Stomach (tissue), 19 donors: ENCODE measurements at regions of chr9 and their contacts with region 1.

Region 1: DNA sequence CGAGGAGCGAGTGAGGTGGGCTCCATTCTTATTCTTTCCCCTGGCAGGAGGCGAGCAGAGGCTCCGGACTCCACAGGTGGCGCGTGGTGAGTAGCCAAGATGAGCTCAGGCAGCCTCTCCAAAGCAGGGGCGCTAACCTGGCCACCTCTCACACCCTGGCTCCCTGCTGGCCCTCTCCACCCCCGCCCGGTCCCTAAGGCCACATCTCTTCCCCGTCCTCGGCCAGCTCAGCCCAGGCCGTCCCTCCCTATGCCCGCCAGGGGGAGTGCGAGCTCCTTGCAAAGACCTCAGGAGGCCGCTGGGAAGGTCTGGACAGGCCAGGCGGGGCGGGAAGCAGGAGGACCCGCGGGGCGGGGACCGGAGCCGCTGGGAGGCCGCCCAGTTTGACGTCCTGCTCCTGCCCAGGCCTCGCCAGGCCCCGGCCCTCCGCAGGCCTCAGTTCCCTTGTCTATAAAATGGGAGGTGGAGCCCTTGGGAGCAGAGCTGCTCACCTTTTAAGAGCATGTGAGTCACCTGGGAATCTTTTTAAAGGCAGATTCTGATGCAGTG is 46.3 kb upstream of the GGTA1 start:
- DNase-seq: peak; percentile 97 to 98
- H3K4me3 ChIP-seq: peak overlapping the region; percentile 12 to 27 (median 24)
- H3K27ac ChIP-seq: peak overlapping the region in 1 of 5 donors; percentile 63
- H3K4me1 ChIP-seq: peaks cover 17 to 23% (median 22%) of the 10 kb centered on the region in 4 donors
- H3K27me3 ChIP-seq: peaks cover 0 to 5% (median 0%) of the 10 kb centered on the region in 3 donors
- CTCF ChIP-seq: peak in 6 of 7 experiments; percentile 53 to 93 (median 91)
- EP300 ChIP-seq: no peak
- POLR2A ChIP-seq: no peak

Region 2: GRCh38 chr9:121698627-121699570 is 152.9 kb after region 1 on chr9:
- intact Hi-C with region 1: no loop called
- DNase-seq: peak; percentile 67 to 88
- H3K4me3 ChIP-seq: peak overlapping the region; percentile 54 to 65 (median 58)
- H3K27ac ChIP-seq: peak overlapping the region; percentile 6 to 83 (median 77)
- H3K4me1 ChIP-seq: peaks cover 30 to 43% (median 37%) of the 10 kb centered on the region in 4 donors
- H3K27me3 ChIP-seq: peaks cover 0 to 37% (median 5%) of the 10 kb centered on the region in 3 donors
- CTCF ChIP-seq: no peak
- EP300 ChIP-seq: no peak
- POLR2A ChIP-seq: no peak

Region 3: DNA sequence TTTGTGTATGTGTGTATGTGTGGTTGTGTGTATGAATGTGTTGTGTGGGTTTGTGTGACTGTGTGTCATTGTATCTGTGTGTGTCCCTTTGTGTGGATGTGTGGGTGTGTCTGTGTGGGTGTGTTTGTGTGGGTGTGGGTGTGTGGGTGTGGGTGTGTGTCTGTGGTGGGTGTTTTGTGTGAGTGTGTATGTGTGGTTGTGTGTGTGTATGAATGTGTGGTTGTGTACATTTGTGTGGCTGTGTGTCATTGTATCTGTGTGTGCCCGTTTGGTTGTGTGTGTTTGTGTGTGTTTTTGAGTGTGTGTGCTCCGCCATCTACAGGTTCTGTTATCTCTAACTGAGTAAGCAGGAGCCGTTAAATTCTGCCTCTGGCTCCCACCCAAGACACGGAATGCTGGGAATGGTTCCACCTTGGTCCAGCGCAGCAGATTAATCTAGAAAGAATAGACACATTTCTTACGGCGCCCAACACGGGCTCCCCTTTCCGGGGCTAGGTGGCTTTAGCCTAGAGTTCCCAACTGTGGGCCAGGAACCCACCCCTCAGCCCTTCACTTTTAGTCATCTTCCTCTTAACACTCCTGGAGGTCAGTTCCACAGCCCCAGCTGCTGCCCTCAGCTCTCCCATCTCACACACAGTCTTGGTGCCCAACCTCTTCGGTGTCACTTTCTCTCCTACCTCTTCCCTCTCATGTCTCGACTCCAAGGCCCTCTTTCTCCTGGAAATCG is 350.0 kb after region 1 on chr9:
- intact Hi-C with region 1: no loop called
- DNase-seq: peak; percentile 76 to 78
- H3K4me3 ChIP-seq: no peak overlapping the region
- H3K27ac ChIP-seq: no peak overlapping the region
- H3K4me1 ChIP-seq: peaks cover 0 to 3% (median 0%) of the 10 kb centered on the region in 4 donors
- H3K27me3 ChIP-seq: no peaks in the 10 kb centered on the region
- CTCF ChIP-seq: peak in 1 of 7 experiments; percentile 16
- EP300 ChIP-seq: no peak
- POLR2A ChIP-seq: no peak

Region 4: DNA sequence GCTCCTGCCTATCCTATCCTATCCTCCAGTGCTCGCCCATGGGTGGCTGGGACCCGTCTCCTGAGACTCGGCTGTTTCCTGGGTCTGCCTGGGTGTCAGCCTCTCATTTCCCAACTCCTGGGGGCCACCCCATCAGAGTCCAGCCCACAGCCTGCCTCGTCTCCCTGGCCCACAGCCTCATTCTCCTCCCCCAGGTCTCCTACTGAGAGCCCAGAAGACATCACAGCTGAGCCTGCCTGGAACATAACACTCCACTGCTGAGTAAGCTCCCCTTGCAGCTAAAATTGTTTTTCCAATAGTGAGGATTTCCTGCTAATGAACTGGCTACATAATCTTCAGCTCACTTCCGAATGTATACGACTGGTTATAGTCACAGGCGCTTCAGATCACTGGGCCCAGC is 451.8 kb after region 1 on chr9:
- intact Hi-C with region 1: loop called (anchors 5 kb)
- DNase-seq: peak in 1 of 2 donors; percentile 66
- H3K4me3 ChIP-seq: no peak overlapping the region
- H3K27ac ChIP-seq: no peak overlapping the region
- H3K4me1 ChIP-seq: peaks cover 0 to 34% (median 8%) of the 10 kb centered on the region in 4 donors
- H3K27me3 ChIP-seq: no peaks in the 10 kb centered on the region
- CTCF ChIP-seq: no peak
- EP300 ChIP-seq: no peak
- POLR2A ChIP-seq: no peak